Body of pancreas (tissue), 4 donors: ENCODE measurements at regions of chrX and their contacts with region 1.

Region 1: GRCh38 chrX:71068049-71068763 is at the start of gene SNX12:
- DNase-seq: peak; percentile 90 to 95 (median 94)
- ATAC-seq: peak; percentile 99
- H3K4me3 ChIP-seq: peak within 1 kb of the TSS; percentile 41 to 60
- H3K27ac ChIP-seq: peak within 1 kb of the TSS; percentile 11 to 89 (median 73)
- H3K4me1 ChIP-seq: peaks cover 8% of the 10 kb centered on the region
- H3K27me3 ChIP-seq: no peaks in the 10 kb centered on the region
- CTCF ChIP-seq: peak in 4 of 7 experiments; percentile 72 to 98 (median 86)
- POLR2A ChIP-seq: peak in 2 of 3 donors; percentile 63 to 64
- total RNA-seq, gene SNX12: 16.2 to 20.0 TPM

Region 2: DNA sequence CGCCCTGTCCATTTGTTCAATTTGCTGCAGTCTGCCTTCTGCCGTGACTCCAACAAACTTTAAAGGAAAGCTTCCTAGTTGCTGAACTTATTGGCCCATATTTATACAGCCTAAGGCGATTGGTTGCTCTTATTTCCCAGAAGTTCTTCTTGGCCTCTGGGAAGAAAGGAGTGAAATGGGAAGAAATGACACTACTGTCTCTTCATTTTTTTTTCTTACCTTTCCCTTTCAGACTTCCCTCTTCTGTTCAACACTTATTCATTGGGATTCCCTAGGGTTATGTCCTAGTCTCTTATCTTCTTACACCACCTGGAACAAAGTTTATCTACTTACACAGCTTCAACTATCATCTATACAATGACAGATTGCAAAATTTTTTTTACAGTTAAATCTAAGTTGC is 68.1 kb before region 1 on chrX:
- intact Hi-C with region 1: loop called (anchors 10 kb)
- DNase-seq: no peak
- ATAC-seq: no peak
- H3K4me3 ChIP-seq: no peak overlapping the region
- H3K27ac ChIP-seq: no peak overlapping the region
- H3K4me1 ChIP-seq: no peaks in the 10 kb centered on the region
- H3K27me3 ChIP-seq: no peaks in the 10 kb centered on the region
- CTCF ChIP-seq: no peak
- POLR2A ChIP-seq: no peak